Right ventricle myocardium inferior (tissue), 1 donor: ENCODE measurements at regions of chr11 and their contacts with region 1.

Region 1: DNA sequence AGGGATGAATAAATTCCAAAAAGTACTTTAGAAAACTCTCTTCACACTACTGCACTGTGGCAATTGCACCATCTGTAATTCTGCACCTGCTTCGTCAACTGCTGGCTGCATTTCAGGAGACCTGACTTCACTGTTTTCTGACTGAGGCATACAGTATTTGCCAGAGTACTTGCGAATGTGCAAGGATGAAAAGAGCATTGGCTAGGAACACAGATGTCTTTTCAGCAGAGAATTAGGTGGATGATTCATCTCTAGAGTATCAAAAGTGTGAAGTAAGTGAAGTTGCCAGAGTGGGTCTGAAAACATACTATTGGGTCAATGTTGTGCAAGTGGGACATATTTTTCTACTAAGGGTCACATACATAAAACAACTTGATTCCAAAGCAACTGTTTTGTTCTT is 427.5 kb upstream of the CCDC90B start:
- DNase-seq: no peak
- ATAC-seq: peak; percentile 52

Region 2: GRCh38 chr11:83456075-83456474 is 257.6 kb before region 1 on chr11:
- intact Hi-C with region 1: loop called (anchors 10 kb)
- DNase-seq: no peak
- ATAC-seq: no peak